Gastrocnemius medialis (tissue), 4 donors: ENCODE measurements at regions of chr3 and their contacts with region 1.

Region 1: DNA sequence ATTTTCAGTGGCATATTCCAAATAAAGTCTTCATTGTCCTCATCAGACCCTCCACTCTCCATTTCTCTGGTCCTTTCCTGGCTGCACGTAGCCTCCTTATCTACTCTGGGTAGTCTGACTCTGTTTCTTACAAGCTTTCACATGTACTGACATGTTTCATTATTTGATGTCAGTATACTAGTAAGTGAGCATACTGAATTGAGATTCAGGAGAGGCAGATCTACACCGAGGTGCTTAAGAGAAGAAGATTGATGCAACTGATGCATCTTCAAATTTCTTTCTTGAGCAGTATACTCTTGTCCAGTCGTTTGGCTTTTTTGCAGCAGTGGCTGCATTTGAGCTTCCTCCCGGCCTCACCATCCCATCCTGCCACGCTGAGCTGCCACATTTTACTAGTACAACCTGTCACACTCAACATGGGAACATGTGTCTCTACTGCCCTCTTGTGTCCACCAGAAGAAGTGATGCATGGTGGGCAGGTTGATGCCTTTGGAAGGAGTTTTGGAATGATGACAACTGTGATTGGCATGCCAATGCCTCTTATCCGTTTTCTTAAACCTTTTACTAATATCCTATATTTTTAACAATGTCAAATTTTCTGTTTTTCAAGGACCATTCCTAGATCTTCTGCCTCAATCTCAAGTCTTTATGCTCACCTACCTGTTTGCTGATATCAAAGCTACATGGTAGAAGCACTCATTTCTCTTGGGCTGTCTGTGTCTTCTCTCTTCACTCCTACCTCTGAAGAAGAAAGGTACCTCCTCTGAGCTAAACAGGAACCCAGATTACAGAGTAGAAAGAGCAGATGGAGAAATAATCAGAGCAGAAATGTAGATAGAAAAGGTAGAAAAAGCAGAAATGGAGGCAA is 38.7 kb downstream of the GUCA1C start:
- DNase-seq: no peak
- ATAC-seq: peak in 1 of 2 donors; percentile 68
- H3K4me3 ChIP-seq: no peak overlapping the region
- H3K27ac ChIP-seq: no peak overlapping the region
- H3K4me1 ChIP-seq: no peaks in the 10 kb centered on the region
- H3K27me3 ChIP-seq: no peaks in the 10 kb centered on the region
- CTCF ChIP-seq: peak; percentile 48 to 74 (median 60)
- POLR2A ChIP-seq: no peak

Region 2: GRCh38 chr3:108673988-108674661 is 240.9 kb before region 1 on chr3:
- in situ Hi-C with region 1: loop called in 3 of 4 experiments (anchors 5 to 10 kb)
- intact Hi-C with region 1: no loop called
- DNase-seq: no peak
- ATAC-seq: no peak
- H3K4me3 ChIP-seq: no peak overlapping the region
- H3K27ac ChIP-seq: no peak overlapping the region
- H3K4me1 ChIP-seq: no peaks in the 10 kb centered on the region
- H3K27me3 ChIP-seq: no peaks in the 10 kb centered on the region
- CTCF ChIP-seq: no peak
- POLR2A ChIP-seq: no peak

Region 3: GRCh38 chr3:109597444-109597843 is 682.4 kb after region 1 on chr3:
- in situ Hi-C with region 1: no loop called
- intact Hi-C with region 1: no loop called
- DNase-seq: no peak
- ATAC-seq: no peak
- H3K4me3 ChIP-seq: no peak overlapping the region
- H3K27ac ChIP-seq: no peak overlapping the region
- H3K4me1 ChIP-seq: no peaks in the 10 kb centered on the region
- H3K27me3 ChIP-seq: no peaks in the 10 kb centered on the region
- CTCF ChIP-seq: no peak
- POLR2A ChIP-seq: no peak

Region 4: DNA sequence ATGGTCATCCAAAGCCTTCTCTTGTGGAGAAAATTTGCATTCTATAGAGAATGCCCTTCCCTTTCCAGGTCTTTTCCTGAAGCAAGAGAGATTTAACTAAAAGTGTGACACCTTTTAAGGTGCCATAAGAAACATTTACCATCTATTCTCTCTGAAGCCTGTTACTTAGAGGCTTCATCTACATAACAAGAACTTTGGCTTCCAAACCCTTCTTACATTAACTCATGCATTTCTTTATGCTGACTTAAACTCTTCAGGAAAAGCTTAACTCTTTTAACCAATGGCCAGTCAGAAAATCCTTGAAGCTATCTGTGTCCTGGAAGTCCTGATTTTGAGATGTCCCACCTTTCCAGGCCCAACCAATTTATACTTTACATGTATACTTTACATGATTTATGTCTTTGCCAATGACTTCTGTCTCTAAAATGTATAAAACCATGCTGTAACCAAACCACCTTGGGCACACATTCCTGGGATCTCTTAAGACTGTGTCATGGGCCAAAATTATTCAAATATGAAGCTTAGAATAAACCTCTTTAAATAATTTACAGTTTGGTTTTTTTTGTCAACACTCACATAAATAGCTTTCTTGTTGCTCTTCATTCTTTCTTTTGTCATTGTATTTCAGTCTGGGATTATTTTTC is 1684.0 kb after region 1 on chr3:
- in situ Hi-C with region 1: no loop called
- intact Hi-C with region 1: no loop called
- DNase-seq: no peak
- ATAC-seq: no peak
- H3K4me3 ChIP-seq: no peak overlapping the region
- H3K27ac ChIP-seq: no peak overlapping the region
- H3K4me1 ChIP-seq: no peaks in the 10 kb centered on the region
- H3K27me3 ChIP-seq: no peaks in the 10 kb centered on the region
- CTCF ChIP-seq: no peak
- POLR2A ChIP-seq: no peak